HepG2 (cell line): ENCODE measurements at regions of chr7 and their contacts with region 1.

Region 1: DNA sequence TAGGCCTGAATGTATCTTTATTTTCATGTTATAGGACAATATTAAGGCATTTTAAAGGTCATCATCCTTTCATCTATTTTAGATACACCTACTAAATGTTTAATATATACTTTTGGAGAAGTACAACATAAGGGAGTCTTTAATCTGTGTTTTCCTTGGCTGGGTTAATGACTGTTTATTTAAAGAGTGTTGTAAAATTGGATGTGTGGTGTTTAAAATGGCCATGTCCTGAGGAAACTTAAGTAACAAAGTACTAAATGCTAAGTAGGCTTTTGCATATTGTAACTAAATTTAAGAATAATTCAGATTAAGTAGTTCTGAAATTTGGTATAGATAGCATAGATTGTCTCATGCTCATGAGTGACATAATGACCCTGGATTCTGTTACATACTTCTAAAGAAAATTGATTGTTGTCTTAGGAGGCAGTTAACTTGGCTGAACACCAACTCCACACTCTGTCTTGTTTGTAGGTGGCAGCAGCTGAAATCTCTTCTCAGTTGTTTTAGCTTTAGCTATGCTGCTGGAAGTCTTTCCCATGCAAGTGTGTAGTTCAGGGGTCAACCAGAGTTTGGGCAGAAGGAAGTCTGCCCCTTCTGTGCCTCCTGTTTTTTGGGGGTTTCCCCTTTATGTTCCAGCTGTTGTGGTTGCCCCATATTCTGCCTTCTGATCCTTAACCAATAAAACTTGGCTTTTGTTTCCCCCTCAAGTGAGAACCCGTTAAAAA is 29.2 kb downstream of the DLD start:
- DNase-seq: no peak
- ATAC-seq: no peak
- H3K4me3 ChIP-seq: no peak overlapping the region
- H3K27ac ChIP-seq: no peak overlapping the region
- H3K4me1 ChIP-seq: no peaks in the 10 kb centered on the region
- H3K27me3 ChIP-seq: no peaks in the 10 kb centered on the region
- CTCF ChIP-seq: no peak
- EP300 ChIP-seq: no peak
- POLR2A ChIP-seq: no peak
- RAD21 ChIP-seq: no peak

Region 2: DNA sequence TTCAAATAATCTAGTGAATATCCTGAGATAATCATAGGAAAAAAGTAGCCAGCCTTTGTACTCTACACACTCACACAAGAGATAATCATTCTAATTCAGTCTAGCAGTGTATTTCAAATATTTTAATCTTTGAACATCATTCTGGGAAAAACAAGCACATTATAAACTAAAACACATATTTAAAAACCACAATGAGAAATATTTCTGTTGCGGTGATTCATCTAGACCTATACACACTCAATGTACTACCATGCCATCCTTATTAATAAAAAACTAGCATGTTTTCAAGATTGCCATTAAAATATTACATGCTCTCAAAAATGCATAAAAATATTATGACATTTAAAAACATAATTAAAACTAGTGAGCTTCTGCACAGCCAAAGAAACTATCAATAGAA is 368.3 kb before region 1 on chr7:
- CTCF ChIA-PET with region 1: no interaction called
- POLR2A ChIA-PET with region 1: no interaction called
- in situ Hi-C with region 1: no loop called
- intact Hi-C with region 1: no loop called
- DNase-seq: no peak
- ATAC-seq: no peak
- H3K4me3 ChIP-seq: no peak overlapping the region
- H3K27ac ChIP-seq: no peak overlapping the region
- H3K4me1 ChIP-seq: no peaks in the 10 kb centered on the region
- H3K27me3 ChIP-seq: no peaks in the 10 kb centered on the region
- CTCF ChIP-seq: no peak
- EP300 ChIP-seq: no peak
- POLR2A ChIP-seq: no peak
- RAD21 ChIP-seq: no peak

Region 3: DNA sequence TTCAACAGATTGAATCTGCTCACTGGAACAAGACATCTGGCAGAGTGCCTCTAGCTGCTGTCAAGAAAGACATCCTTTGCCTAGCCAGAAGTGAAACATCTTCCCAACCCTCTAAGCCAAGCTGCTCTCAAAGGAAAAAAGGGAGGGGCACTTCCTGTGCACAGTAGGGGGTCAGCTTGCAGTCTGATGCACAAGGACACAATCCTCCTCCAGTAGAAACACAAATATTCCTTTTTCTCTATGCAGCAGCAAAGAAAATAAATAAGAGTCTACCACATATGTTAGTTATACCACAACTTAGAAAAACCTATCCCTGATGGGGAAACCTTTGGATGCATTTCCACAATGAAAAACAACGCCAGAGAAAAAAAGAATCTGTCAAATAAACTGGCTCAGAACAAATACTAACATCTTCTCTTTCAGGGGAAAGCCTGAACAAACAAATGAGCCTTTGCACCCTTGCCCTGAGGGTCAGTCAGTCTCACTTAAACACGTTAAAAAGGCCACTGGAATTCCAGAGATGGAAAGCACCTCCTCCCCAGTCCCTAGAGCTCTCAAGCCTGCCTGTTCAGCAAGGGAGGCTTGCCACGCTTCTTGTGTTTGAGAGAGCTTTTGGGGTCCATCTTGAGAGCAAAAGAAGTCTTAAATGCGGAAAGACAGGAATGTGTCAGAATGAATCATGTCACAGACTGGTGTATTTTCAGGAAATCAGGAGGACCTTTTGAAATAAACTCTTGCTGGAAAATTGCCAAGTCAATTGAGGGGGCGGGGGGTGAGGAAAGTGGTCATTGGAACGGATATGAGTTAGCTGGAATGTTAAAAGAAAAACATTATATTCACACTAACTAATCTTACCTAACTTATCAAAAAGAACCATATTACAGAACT is 75.2 kb after region 1 on chr7:
- CTCF ChIA-PET with region 1: no interaction called
- POLR2A ChIA-PET with region 1: no interaction called
- in situ Hi-C with region 1: no loop called
- intact Hi-C with region 1: loop called (anchors 2 kb)
- DNase-seq: peak; percentile 82
- ATAC-seq: peak; percentile 94
- H3K4me3 ChIP-seq: peak overlapping the region in 2 of 3 experiments; percentile 2 to 8; a peak in 1 of 6 replicates
- H3K27ac ChIP-seq: peak overlapping the region; percentile 61
- H3K4me1 ChIP-seq: peaks cover 70% of the 10 kb centered on the region
- H3K27me3 ChIP-seq: no peaks in the 10 kb centered on the region
- CTCF ChIP-seq: no peak
- EP300 ChIP-seq: peak in 1 of 2 experiments; percentile 60; a peak in 2 of 4 replicates
- POLR2A ChIP-seq: no peak
- RAD21 ChIP-seq: no peak